ENCODE measurements at regions of chr21 and their contacts with region 1.

Region 1: GRCh38 chr21:14722841-14723483 is 176.8 kb upstream of the SAMSN1 start:
- DNase-seq: no peak
- H3K4me3 ChIP-seq: no peak overlapping the region
- H3K27ac ChIP-seq: no peak overlapping the region
- H3K4me1 ChIP-seq: no peaks in the 10 kb centered on the region
- H3K27me3 ChIP-seq: no peaks in the 10 kb centered on the region
- CTCF ChIP-seq: no peak
- POLR2A ChIP-seq: no peak

Region 2: DNA sequence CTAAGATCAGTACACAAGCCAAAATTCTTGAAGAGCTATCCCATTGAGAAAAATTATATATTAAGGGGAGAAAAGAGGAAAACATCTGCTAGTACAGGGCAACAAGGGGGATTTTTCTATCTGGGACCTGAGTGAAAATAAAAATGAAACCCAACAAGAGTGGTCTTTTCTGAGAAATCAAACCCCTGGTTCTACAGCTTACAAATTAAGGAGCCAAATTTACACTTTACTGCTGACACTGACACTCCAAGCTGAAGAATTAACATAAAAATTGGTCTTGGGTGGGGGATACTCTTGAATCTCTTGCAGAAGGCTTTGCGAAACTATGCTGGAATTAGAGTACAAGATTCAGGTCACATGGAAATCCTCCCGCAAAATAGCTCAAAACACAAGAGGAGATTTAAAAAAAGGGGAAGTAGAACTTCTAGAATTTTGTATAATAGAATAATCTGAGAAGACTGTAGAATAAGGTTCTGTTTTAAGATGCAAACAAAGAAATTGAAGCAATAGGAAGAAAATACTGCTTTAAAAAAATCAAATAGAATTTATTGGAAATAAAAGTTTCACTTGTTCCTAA is 307.9 kb before region 1 on chr21:
- intact Hi-C with region 1: loop called in 1 of 2 experiments (anchors 10 kb)
- DNase-seq: no peak
- H3K4me3 ChIP-seq: no peak overlapping the region
- H3K27ac ChIP-seq: no peak overlapping the region
- H3K4me1 ChIP-seq: no peaks in the 10 kb centered on the region
- H3K27me3 ChIP-seq: no peaks in the 10 kb centered on the region
- CTCF ChIP-seq: no peak
- POLR2A ChIP-seq: no peak

Region 3: GRCh38 chr21:14482165-14482564 is 240.8 kb before region 1 on chr21:
- intact Hi-C with region 1: no loop called
- DNase-seq: peak in 1 of 7 donors; percentile 15
- H3K4me3 ChIP-seq: no peak overlapping the region
- H3K27ac ChIP-seq: no peak overlapping the region
- H3K4me1 ChIP-seq: peaks cover 0 to 6% of the 10 kb centered on the region in 2 donors
- H3K27me3 ChIP-seq: no peaks in the 10 kb centered on the region
- CTCF ChIP-seq: no peak
- POLR2A ChIP-seq: no peak

Region 4: GRCh38 chr21:14545906-14546480 is 177.0 kb before region 1 on chr21 and contains the start of gene SAMSN1:
- intact Hi-C with region 1: no loop called
- DNase-seq: peak in 4 of 7 donors; percentile 28 to 69 (median 42)
- H3K4me3 ChIP-seq: peak within 1 kb of the TSS in 1 of 4 donors; percentile 47
- H3K27ac ChIP-seq: peak within 1 kb of the TSS in 3 of 5 donors; percentile 5 to 61 (median 5)
- H3K4me1 ChIP-seq: no peaks in the 10 kb centered on the region
- H3K27me3 ChIP-seq: no peaks in the 10 kb centered on the region
- CTCF ChIP-seq: no peak
- POLR2A ChIP-seq: peak; percentile 33 to 36
- total RNA-seq, gene SAMSN1: 1.4 to 15.3 (median 7.6) TPM

Measured in adrenal gland (tissue), 19 donors.